Gastrocnemius medialis (tissue), 4 donors: ENCODE measurements at regions of chr9 and their contacts with region 1.

Region 1: DNA sequence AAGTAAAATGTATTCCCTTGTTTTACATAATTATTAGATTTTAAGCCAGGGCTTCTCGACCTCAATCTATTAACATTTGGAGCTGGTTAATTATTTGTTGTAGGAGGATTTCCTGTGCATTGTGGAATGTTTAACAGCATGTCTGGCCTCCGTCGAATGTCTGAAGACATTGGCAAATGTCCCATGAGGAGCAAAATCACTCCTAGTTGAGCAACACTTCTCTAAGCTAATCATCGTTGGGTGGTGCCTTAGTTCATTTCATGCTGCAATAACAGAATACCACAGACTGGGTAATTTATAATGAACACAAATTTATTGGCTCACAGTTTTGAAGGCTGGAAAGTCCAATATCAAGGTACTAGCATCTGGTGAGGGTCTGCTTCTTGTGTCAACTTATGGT is 13.4 kb upstream of the VPS13A start:
- DNase-seq: no peak
- ATAC-seq: no peak
- H3K4me3 ChIP-seq: no peak overlapping the region
- H3K27ac ChIP-seq: peak overlapping the region in 2 of 4 donors; percentile 8 to 31
- H3K4me1 ChIP-seq: peaks cover 15 to 23% of the 10 kb centered on the region in 2 donors
- H3K27me3 ChIP-seq: no peaks in the 10 kb centered on the region
- CTCF ChIP-seq: no peak
- POLR2A ChIP-seq: no peak

Region 2: DNA sequence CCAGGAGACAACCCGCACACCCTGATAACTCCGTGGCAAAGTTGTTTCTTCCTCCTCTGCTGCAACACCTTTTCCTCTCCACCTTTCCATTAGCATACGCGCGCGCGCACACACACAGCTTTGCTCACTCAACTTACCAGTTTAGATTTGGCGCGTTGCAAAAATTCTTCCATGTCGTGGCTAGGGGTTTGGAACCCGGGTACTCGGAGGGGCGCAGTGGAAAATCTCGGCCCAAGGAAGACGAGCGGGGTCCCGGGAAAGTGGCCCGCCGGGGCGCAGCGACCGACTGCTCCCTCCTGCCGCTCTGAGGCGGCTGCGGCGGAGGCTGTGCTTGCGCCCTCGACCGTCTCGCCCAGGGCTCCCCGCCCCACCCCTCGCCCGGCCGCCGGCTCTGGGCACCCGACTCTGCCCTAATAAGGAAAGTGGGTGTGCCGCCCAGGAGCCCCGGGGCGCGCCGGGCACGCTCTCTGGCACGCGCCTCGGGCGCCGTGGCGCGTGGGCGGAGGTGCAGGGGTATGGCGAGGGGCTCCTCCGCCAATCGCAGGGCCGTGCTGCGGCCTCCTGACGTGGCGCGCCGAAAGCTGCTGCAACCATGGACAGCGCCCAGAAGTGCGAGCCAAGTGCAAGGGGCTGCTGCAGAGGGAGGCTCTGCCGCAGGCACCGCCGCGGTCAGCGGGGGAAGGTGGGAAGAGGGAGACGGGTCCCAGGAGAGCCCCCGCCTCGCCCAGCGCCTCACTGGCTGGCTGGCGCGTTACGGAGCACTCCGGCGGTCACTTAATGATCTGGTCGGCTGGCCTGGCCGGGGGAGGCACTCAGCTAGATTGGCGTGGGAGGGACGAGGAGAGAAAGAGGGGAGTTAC is 257.9 kb before region 1 on chr9 and contains the start of gene PRUNE2:
- in situ Hi-C with region 1: no loop called
- intact Hi-C with region 1: loop called (anchors 10 kb)
- DNase-seq: peak in 1 of 2 donors; percentile 34
- ATAC-seq: peak; percentile 30 to 65
- H3K4me3 ChIP-seq: peak within 1 kb of the TSS; percentile 45 to 61 (median 49)
- H3K27ac ChIP-seq: peak within 1 kb of the TSS in 3 of 4 donors; percentile 3 to 56 (median 22)
- H3K4me1 ChIP-seq: peaks cover 12 to 18% of the 10 kb centered on the region in 2 donors
- H3K27me3 ChIP-seq: no peaks in the 10 kb centered on the region
- CTCF ChIP-seq: no peak
- POLR2A ChIP-seq: peak; percentile 55 to 70
- total RNA-seq, gene PRUNE2: 1.6 to 43.5 (median 11.0) TPM

Region 3: DNA sequence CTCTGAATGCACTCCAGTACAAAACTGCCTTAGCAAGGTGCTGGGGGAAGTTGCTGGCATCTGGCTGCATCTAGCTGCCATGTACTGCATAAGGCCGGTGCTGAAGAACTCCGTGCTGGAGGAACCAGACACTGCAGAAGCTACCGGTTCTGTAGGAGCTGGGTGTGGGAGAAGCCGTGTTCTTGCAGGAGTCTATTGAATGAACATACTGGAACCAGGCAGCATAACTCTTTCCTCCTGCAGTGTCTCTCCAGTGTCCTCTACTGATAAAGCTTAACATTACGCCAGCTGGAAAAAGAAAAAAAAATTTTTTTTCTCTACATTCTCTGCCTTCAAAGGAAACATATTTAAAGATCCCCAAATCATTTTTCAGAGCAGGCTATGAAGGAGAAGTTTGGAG is 52.0 kb after region 1 on chr9:
- in situ Hi-C with region 1: loop called in 1 of 4 experiments (anchors 10 kb)
- intact Hi-C with region 1: loop called (anchors 2 kb)
- DNase-seq: no peak
- ATAC-seq: peak; percentile 74 to 76
- H3K4me3 ChIP-seq: no peak overlapping the region
- H3K27ac ChIP-seq: peak overlapping the region; percentile 9 to 42 (median 30)
- H3K4me1 ChIP-seq: peaks cover 0 to 6% of the 10 kb centered on the region in 2 donors
- H3K27me3 ChIP-seq: no peaks in the 10 kb centered on the region
- CTCF ChIP-seq: peak in 2 of 5 experiments; percentile 10 to 28
- POLR2A ChIP-seq: no peak